ENCODE measurements at regions of chr7 and their contacts with region 1.

Region 1: GRCh38 chr7:97117372-97118188 is at the start of gene SDHAF3:
- DNase-seq: peak; percentile 97
- H3K4me3 Mint-ChIP-seq: peak within 1 kb of the TSS; percentile 94
- H3K27ac Mint-ChIP-seq: peak within 1 kb of the TSS; percentile 91
- H3K4me1 Mint-ChIP-seq: peaks cover 37% of the 10 kb centered on the region
- H3K27me3 Mint-ChIP-seq: no peaks in the 10 kb centered on the region
- total RNA-seq, gene SDHAF3: 24.1 and 25.4 TPM in 2 replicates

Region 2: GRCh38 chr7:96285579-96285978 is 832.0 kb before region 1 on chr7:
- intact Hi-C with region 1: loop called (anchors 10 kb)
- DNase-seq: peak; percentile 50
- H3K4me3 Mint-ChIP-seq: peak overlapping the region; percentile 66
- H3K27ac Mint-ChIP-seq: peak overlapping the region; percentile 93
- H3K4me1 Mint-ChIP-seq: peaks cover 51% of the 10 kb centered on the region
- H3K27me3 Mint-ChIP-seq: no peaks in the 10 kb centered on the region

Region 3: DNA sequence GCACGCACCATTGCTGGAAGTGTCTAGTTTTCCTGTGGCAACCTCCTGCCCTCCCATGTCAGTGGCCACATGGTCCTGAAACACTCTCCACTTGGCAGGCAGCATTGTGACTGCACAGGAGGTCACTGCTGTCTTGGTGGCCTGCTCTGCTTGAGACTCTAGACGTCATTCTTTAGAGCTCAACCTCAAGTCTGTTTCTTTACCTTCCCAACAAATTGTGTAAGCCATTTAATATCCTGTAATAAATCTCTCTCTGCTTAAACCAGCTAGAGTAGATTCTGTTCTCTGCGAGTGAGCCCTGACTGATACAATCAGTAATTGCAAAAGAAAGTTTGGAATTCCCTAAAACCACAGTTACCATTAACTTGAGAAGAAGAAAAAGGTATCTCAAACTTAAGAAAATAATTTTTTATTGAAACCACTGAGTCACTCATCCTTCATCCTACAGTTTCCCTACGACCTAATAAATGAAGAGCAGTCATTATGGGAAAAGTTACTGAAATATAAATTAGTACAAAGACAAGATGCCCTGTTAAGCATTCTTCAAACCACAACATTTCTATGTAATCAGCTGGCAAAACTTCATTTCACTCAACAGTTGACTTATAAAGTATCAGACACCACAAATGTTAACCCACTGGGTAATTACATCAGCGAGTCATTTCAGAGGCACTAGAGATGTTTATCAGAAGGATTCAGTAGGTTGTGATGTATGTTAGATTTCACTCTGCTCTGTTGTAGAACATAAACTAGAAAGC is 813.7 kb before region 1 on chr7:
- intact Hi-C with region 1: loop called (anchors 1 kb)
- DNase-seq: no peak
- H3K4me3 Mint-ChIP-seq: peak overlapping the region; percentile 0
- H3K27ac Mint-ChIP-seq: peak overlapping the region; percentile 62
- H3K4me1 Mint-ChIP-seq: peaks cover 46% of the 10 kb centered on the region
- H3K27me3 Mint-ChIP-seq: no peaks in the 10 kb centered on the region

Region 4: GRCh38 chr7:96709381-96710228 is 408.0 kb before region 1 on chr7 and contains the start of gene SEM1:
- intact Hi-C with region 1: loop called (anchors 1 kb)
- DNase-seq: peak; percentile 53
- H3K4me3 Mint-ChIP-seq: peak within 1 kb of the TSS; percentile 99
- H3K27ac Mint-ChIP-seq: peak within 1 kb of the TSS; percentile 98
- H3K4me1 Mint-ChIP-seq: peaks cover 14% of the 10 kb centered on the region
- H3K27me3 Mint-ChIP-seq: no peaks in the 10 kb centered on the region
- total RNA-seq, gene SEM1: 41.2 and 42.8 TPM in 2 replicates

Region 5: DNA sequence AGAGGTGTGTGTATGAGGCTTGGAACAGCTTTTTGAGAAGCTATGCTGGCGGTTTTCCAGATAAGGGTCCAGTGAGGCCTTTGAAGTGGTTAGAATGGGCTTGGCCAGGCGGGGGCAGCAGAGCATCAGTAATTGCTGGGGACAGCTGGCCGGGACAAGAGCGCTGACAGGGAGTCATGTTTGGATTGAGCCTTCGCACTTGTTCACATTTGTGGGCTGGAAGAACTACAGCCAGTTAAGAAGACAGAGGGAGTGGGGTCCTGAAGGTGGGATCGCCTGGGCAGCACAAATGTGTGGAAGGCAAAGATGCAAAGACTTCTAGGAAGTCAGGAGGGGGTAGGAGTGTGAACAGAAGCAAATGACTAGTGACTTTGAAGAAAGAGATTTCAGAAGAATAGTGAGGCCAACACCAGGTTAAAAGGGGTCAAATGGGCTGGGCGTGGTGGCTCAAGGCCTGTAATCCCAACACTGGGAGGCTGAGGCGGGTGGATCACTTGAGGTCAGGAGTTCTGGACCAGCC is 12.8 kb before region 1 on chr7:
- intact Hi-C with region 1: no loop called
- DNase-seq: peak; percentile 54
- H3K4me3 Mint-ChIP-seq: no peak overlapping the region
- H3K27ac Mint-ChIP-seq: no peak overlapping the region
- H3K4me1 Mint-ChIP-seq: no peaks in the 10 kb centered on the region
- H3K27me3 Mint-ChIP-seq: peaks cover 6% of the 10 kb centered on the region

Region 6: DNA sequence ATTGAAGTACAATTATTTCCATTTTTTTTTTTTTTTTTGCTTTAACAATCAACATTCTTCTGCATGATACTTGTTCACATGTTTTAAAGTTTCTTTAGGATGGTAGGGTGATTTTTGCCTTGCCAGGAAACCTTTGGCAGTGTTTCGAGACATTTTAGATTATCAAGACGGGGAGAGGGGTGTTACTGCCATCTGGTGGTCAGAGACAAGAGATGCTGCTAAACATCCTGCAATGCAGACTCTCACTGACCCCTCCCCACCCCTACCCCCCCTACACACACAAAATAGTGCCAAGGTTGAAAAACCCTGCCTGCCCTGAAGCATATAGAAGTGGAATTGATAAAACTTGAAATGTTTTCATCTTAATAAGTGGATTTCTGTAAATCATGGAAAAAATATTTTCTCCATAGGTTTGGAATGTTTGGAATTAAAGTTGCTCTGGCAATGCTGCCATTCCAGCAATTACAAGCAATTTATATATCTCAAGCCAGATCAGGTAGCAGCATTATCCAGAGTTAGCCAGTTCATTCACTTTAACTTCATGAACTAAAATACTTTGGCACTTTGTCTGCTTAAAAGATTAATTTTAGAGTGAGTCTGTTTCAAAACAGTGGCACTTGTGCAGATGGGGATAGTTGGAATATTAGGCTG is 62.0 kb after region 1 on chr7:
- intact Hi-C with region 1: loop called (anchors 5 kb)
- DNase-seq: peak; percentile 5
- H3K4me3 Mint-ChIP-seq: no peak overlapping the region
- H3K27ac Mint-ChIP-seq: no peak overlapping the region
- H3K4me1 Mint-ChIP-seq: no peaks in the 10 kb centered on the region
- H3K27me3 Mint-ChIP-seq: no peaks in the 10 kb centered on the region

Region 7: GRCh38 chr7:97872025-97872669 is 754.6 kb after region 1 on chr7 and contains the start of gene ASNS:
- intact Hi-C with region 1: loop called (anchors 1 kb)
- DNase-seq: peak; percentile 86
- H3K4me3 Mint-ChIP-seq: peak within 1 kb of the TSS; percentile 90
- H3K27ac Mint-ChIP-seq: peak within 1 kb of the TSS; percentile 86
- H3K4me1 Mint-ChIP-seq: peaks cover 20% of the 10 kb centered on the region
- H3K27me3 Mint-ChIP-seq: no peaks in the 10 kb centered on the region
- total RNA-seq, gene ASNS: 71.1 and 79.6 TPM in 2 replicates

Region 8: DNA sequence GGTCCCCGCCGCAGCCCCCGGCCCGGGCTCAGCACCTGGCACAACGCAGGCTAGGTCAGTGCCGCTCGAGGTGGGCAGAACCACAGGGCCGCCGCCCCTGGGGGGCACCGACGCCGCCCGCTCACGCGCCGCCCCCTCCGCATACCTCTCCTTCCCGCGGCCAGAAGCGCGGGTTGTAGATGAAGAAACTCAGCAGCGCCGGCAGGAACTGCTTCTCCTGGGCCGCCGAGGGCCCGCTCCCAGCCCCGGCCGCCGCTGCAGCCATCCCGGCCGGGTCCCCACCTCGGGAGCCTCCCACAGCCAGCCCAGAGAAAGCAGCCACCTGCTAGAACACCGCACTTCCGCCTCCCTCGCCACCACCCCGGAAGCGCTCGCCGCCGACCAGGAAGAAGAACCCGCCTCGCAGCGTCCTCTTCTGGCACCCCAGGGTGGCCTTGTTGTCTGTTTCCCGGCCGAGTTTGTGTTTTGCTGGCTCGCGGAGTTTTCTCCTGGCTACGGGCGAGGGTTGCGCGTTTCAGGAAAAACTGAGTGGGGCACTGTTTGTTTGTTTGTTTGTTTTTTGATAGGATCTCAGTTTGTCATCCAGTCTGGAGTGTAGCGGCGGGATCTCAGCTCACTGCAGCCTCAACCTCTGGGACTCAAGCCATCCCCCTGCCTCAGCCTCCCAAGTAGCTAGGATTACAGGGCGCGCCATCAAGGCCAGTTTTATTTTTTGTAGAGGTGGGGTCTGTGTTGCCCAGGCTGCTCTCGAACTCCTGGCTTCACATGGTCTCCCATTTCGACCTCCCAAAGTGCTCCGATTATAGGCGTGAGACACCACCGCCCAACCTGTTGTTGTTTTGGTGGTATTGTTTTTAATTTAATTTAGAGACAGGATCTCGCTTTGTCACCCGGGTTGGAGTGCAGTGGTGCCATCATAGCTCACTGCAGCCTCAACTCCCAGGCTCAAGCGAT is 854.7 kb after region 1 on chr7:
- intact Hi-C with region 1: loop called (anchors 1 kb)
- DNase-seq: peak; percentile 80
- H3K4me3 Mint-ChIP-seq: peak overlapping the region; percentile 99
- H3K27ac Mint-ChIP-seq: peak overlapping the region; percentile 94
- H3K4me1 Mint-ChIP-seq: peaks cover 13% of the 10 kb centered on the region
- H3K27me3 Mint-ChIP-seq: peaks cover 4% of the 10 kb centered on the region

Measured in activated T-helper 1 cell treated with anti-CD3 and anti-CD28 coated beads, Interleukin-12 subunit alpha, Interleukin-12 subunit beta, Interleukin-2, Interleukin-4 antibody, amounts not matched to agents 30 ng/mL and 10 ng/mL and 1 ng/mL, durations not matched to agents 14 hours and 24 hours and 36 hours (primary cell).